ENCODE measurements at regions of chr3 and their contacts with region 1.

Region 1: DNA sequence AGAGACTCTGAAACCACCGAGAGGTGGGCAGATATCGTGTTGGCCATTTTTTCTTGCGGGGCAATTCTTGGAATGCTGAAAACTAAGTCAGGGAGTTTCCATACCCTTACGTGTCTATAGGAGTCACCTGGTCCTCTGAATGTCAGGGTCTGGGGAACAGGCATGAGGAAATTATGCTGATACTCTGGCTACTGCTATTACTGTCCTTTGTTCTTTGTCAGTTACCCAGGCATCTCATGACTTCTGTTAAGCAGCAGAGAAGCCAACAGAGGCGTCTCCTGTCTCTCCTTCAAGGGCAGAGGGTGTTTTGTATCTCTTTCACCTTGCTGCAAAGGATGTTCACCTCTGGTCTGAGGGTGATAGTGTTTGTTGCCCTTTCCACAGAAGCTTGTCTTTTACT is 559.5 kb upstream of the CCDC54 start:
- DNase-seq: no peak
- H3K4me3 Mint-ChIP-seq: no peak overlapping the region
- H3K27ac Mint-ChIP-seq: no peak overlapping the region
- H3K4me1 Mint-ChIP-seq: no peaks in the 10 kb centered on the region
- H3K27me3 Mint-ChIP-seq: no peaks in the 10 kb centered on the region

Region 2: GRCh38 chr3:106728315-106729098 is 89.2 kb before region 1 on chr3:
- CTCF ChIA-PET with region 1: no interaction called
- DNase-seq: no peak
- H3K4me3 Mint-ChIP-seq: no peak overlapping the region
- H3K27ac Mint-ChIP-seq: no peak overlapping the region
- H3K4me1 Mint-ChIP-seq: no peaks in the 10 kb centered on the region
- H3K27me3 Mint-ChIP-seq: no peaks in the 10 kb centered on the region

Region 3: DNA sequence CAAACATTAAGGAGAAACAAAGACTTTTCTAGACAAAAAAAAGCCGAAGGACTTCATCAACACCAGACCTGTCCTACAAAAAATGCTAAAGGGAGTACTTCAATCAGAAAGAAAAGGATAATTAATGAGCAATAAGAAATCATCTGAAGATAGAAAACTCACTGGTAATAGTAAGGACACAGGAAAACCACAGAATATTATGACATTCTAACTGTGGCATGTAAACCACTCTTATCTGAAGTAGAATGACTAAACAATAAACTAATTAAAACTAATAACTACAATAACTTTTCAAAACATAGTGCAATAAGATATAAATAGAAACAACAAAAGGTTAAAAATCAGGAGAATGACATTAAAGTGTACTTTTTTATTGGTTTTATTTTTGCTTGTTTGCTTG is 25.0 kb before region 1 on chr3:
- CTCF ChIA-PET with region 1: no interaction called
- DNase-seq: no peak
- H3K4me3 Mint-ChIP-seq: no peak overlapping the region
- H3K27ac Mint-ChIP-seq: no peak overlapping the region
- H3K4me1 Mint-ChIP-seq: no peaks in the 10 kb centered on the region
- H3K27me3 Mint-ChIP-seq: no peaks in the 10 kb centered on the region

Region 4: DNA sequence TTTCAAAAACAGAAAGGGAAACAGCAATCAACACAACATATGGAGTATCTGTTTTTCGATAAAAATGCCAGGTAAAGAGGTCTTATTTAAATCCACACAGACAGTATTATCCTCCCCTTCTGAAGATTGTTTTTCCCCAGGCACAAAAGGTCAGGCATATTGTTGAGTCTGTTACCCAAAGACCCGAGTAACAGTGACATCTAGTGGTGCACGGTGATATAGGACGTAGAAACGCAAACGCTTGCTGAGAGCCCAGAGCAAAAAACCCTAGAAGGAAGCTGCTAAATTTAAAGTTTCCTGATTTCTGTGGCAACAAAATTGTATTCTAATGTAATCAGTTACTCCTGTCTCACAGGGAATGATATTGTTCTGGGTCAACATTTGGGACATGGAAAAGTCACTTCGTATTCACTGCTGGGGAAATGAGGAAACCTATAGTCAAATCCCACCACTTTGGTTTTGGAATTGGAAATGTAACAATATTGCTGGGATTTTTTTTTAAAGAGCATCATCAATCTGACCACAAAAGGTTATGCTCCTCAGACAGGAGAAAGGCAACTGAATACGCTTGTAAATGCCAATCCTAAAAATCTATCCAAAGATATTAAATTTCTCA is 246.8 kb after region 1 on chr3:
- CTCF ChIA-PET with region 1: interaction called, 13 read pairs
- DNase-seq: peak; percentile 71
- H3K4me3 Mint-ChIP-seq: no peak overlapping the region
- H3K27ac Mint-ChIP-seq: no peak overlapping the region
- H3K4me1 Mint-ChIP-seq: peaks cover 7% of the 10 kb centered on the region
- H3K27me3 Mint-ChIP-seq: peaks cover 6% of the 10 kb centered on the region